ENCODE measurements at regions of chr2 and their contacts with region 1.

Region 1: GRCh38 chr2:99879481-99879880 is 262.9 kb downstream of the AFF3 start:
- DNase-seq: peak; percentile 50
- ATAC-seq: peak; percentile 45; the same call in 1 of the 2 replicates
- H3K4me3 ChIP-seq: no peak overlapping the region
- H3K27ac ChIP-seq: no peak overlapping the region
- H3K4me1 ChIP-seq: peaks cover 10% of the 10 kb centered on the region
- H3K27me3 ChIP-seq: no peaks in the 10 kb centered on the region
- CTCF ChIP-seq: no peak

Region 2: GRCh38 chr2:99975386-99975785 is 95.9 kb after region 1 on chr2:
- CTCF ChIA-PET with region 1: no interaction called
- POLR2A ChIA-PET with region 1: interaction called, 12 read pairs
- in situ Hi-C with region 1: no loop called
- intact Hi-C with region 1: no loop called
- DNase-seq: peak; percentile 81
- ATAC-seq: peak; percentile 60; the same call in 1 of the 2 replicates
- H3K4me3 ChIP-seq: no peak overlapping the region
- H3K27ac ChIP-seq: no peak overlapping the region
- H3K4me1 ChIP-seq: no peaks in the 10 kb centered on the region
- H3K27me3 ChIP-seq: peaks cover 8% of the 10 kb centered on the region; the same call in 1 of the 2 replicates
- CTCF ChIP-seq: no peak

Measured in Panc1 (cell line).